Esophagus muscularis mucosa (tissue), 4 donors: ENCODE measurements at regions of chr6 and their contacts with region 1.

Region 1: DNA sequence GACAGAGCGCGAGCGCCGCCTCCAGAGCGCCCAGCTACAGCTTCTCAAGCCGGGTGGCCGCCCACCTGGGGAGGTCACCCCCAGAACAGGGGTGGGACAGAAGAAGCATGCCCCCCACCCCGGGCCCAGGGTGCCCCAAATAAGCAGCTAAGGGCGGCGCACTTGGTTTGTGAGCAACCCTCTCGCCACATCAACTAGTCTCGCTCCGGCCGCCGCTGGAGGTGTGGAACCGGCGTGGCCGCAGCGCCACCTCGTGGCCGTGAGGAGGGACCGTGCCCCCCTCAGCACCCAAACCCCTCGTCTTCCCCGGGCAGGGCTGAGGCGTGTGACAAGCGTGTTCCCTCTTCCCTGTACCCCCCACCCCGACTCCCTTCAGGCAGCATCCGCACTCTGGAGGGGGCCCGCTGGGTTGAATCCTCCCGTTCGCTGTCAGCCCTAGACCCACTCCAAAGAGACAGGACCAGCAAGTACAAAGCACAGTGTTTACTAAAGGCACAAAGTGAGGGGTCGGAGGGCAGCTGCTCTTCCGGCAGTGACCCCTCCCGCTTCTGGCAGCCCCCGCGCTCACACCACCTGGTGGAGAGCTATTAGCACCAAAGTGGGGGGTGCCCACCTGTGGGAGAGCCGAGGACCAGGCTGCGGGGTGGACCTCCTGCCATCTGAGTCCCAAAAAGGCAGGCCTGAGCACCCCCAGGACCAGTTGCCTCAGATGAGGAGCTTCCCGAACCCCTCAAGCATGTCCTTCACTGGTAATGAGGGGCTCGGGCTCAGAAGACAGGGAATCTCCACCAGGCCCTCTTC is 45.4 kb downstream of the MDFI start:
- DNase-seq: peak; percentile 95
- H3K4me3 ChIP-seq: peak overlapping the region; percentile 50 to 62 (median 54)
- H3K27ac ChIP-seq: peak overlapping the region; percentile 56 to 71 (median 62)
- H3K4me1 ChIP-seq: peaks cover 18 to 27% (median 22%) of the 10 kb centered on the region in 4 donors
- H3K27me3 ChIP-seq: no peaks in the 10 kb centered on the region
- CTCF ChIP-seq: peak in 2 of 3 experiments; percentile 89 to 94
- EP300 ChIP-seq: no peak
- POLR2A ChIP-seq: no peak

Region 2: DNA sequence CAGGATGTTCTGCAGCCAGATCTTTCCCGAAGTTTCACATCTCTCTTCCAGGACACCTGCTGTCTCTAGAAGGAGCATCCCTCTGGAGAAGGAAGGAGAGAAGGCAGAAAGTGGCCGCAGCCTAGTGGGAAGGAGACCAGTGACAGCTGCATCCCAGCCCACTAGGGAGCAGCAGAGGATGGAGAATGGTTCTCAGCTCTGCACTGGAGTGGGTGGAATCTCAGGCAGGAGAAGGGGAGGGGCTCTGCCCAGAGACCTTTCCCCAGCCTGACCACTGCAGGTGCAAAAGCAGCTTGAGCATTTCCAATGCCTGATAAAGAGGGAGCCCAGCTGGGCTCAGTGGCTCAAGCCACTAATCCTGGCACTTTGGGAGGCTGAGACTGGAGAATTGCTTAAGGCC is 316.0 kb before region 1 on chr6:
- intact Hi-C with region 1: loop called (anchors 2 kb)
- DNase-seq: no peak
- H3K4me3 ChIP-seq: no peak overlapping the region
- H3K27ac ChIP-seq: no peak overlapping the region
- H3K4me1 ChIP-seq: peaks cover 9 to 26% (median 23%) of the 10 kb centered on the region in 4 donors
- H3K27me3 ChIP-seq: peaks cover 0 to 80% (median 7%) of the 10 kb centered on the region in 4 donors
- CTCF ChIP-seq: peak; percentile 29 to 41 (median 39)
- EP300 ChIP-seq: no peak
- POLR2A ChIP-seq: no peak

Region 3: GRCh38 chr6:41463062-41463930 is 220.4 kb before region 1 on chr6:
- intact Hi-C with region 1: loop called (anchors 10 kb)
- DNase-seq: no peak
- H3K4me3 ChIP-seq: no peak overlapping the region
- H3K27ac ChIP-seq: no peak overlapping the region
- H3K4me1 ChIP-seq: no peaks in the 10 kb centered on the region
- H3K27me3 ChIP-seq: peaks cover 0 to 31% (median 0%) of the 10 kb centered on the region in 4 donors
- CTCF ChIP-seq: peak; percentile 50 to 60 (median 57)
- EP300 ChIP-seq: no peak
- POLR2A ChIP-seq: no peak

Region 4: DNA sequence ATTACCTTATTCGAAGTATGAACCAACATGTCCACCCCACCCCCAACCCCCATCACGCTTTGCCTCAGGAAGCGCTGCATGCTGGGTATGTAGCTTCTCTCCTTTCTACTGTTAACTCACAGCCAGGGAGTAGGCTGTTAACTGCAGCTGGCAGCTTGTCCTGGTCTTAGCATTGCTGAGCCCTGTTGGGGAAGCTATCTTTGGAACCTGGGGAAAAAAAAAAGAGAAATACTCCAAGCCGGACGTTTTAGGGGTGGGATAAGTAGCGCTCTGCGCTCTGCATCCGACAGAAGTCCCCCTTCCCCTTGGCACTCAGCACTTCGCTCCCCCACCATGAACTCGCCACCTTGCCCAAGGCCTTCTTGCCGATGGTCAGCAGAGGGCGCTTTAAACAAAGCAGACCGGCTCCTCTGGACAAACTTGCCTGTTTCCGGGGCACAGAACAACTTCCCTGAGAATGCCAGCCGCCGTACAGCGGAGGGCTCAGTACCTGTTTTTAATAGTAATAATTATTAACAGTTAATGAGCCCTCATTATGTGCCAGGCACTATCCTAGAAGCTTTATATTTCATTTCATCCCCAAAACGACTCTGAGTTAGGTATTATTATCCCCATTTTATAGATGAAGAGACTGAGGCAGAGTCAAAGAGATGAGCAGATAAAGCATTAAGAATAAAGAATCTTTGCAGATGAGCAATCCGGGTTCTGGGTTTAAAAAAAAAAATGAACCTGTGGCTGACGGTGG is 80.7 kb before region 1 on chr6:
- intact Hi-C with region 1: loop called (anchors 1 kb)
- DNase-seq: no peak
- H3K4me3 ChIP-seq: peak overlapping the region in 3 of 4 donors; percentile 13 to 23 (median 19)
- H3K27ac ChIP-seq: peak overlapping the region in 2 of 4 donors; percentile 33 to 53
- H3K4me1 ChIP-seq: peaks cover 3 to 20% (median 17%) of the 10 kb centered on the region in 4 donors
- H3K27me3 ChIP-seq: no peaks in the 10 kb centered on the region
- CTCF ChIP-seq: peak; percentile 84 to 96 (median 92)
- EP300 ChIP-seq: no peak
- POLR2A ChIP-seq: no peak